GM13976 (cell line): ENCODE measurements at regions of chr5 and their contacts with region 1.

Region 1: GRCh38 chr5:849651-850301 is 1.0 kb downstream of the ZDHHC11 start:
- DNase-seq: no peak
- CTCF ChIP-seq: no peak

Region 2: GRCh38 chr5:746258-746761 is 103.5 kb before region 1 on chr5:
- in situ Hi-C with region 1: loop called (anchors 25 kb)
- DNase-seq: no peak
- CTCF ChIP-seq: no peak

Region 3: GRCh38 chr5:932628-933250 is 83.0 kb after region 1 on chr5:
- in situ Hi-C with region 1: no loop called
- DNase-seq: no peak
- CTCF ChIP-seq: no peak